Activated CD4-positive, alpha-beta memory T cell treated with anti-CD3 and anti-CD28 coated beads for 36 hours (primary cell): ENCODE measurements at regions of chr1 and their contacts with region 1.

Region 1: GRCh38 chr1:168161459-168161858 is 17.3 kb upstream of the TIPRL start:
- DNase-seq: no peak
- H3K4me3 Mint-ChIP-seq: no peak overlapping the region
- H3K27ac Mint-ChIP-seq: no peak overlapping the region
- H3K4me1 Mint-ChIP-seq: no peaks in the 10 kb centered on the region
- H3K27me3 Mint-ChIP-seq: peaks cover 14% of the 10 kb centered on the region

Region 2: DNA sequence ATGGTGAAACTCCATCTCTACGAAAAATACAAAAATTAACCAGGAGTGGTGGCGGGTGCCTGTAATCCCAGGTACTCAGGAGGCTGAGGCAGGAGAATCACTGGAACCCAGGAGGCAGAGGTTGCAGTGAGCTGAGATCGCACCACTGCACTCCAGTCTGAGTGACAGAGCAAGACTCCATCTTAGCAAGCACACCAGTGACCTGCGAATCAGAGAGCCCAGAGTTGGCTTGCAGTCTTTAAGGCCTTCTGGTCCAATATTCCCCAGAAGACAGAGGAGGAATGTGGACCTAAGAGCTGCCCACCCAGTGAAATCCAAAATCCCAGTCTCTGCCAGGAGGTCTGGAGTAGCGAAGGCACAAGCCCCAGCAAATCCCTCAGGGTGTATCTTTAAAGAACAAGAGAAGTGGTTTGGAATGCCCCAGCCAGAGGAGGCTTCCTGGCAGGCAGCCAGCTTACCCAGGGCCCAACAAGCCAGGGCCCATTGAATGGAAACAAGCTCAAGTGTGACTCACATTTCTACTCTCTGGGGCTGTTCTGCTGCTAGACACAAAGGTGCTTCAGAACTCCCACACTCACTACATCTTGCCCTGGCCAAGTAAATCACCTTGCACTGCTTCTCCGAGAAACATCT is 48.7 kb before region 1 on chr1:
- CTCF ChIA-PET with region 1: no interaction called
- POLR2A ChIA-PET with region 1: no interaction called
- intact Hi-C with region 1: no loop called
- DNase-seq: peak; percentile 80
- H3K4me3 Mint-ChIP-seq: no peak overlapping the region
- H3K27ac Mint-ChIP-seq: no peak overlapping the region
- H3K4me1 Mint-ChIP-seq: peaks cover 8% of the 10 kb centered on the region
- H3K27me3 Mint-ChIP-seq: no peaks in the 10 kb centered on the region

Region 3: GRCh38 chr1:168145184-168146159 is 16.0 kb before region 1 on chr1:
- CTCF ChIA-PET with region 1: interaction called, 10 read pairs
- POLR2A ChIA-PET with region 1: no interaction called
- intact Hi-C with region 1: no loop called
- DNase-seq: peak; percentile 91
- H3K4me3 Mint-ChIP-seq: no peak overlapping the region
- H3K27ac Mint-ChIP-seq: no peak overlapping the region
- H3K4me1 Mint-ChIP-seq: peaks cover 13% of the 10 kb centered on the region
- H3K27me3 Mint-ChIP-seq: no peaks in the 10 kb centered on the region

Region 4: GRCh38 chr1:168301664-168302334 is 140.3 kb after region 1 on chr1:
- CTCF ChIA-PET with region 1: no interaction called
- POLR2A ChIA-PET with region 1: no interaction called
- intact Hi-C with region 1: no loop called
- DNase-seq: no peak
- H3K4me3 Mint-ChIP-seq: no peak overlapping the region
- H3K27ac Mint-ChIP-seq: no peak overlapping the region
- H3K4me1 Mint-ChIP-seq: no peaks in the 10 kb centered on the region
- H3K27me3 Mint-ChIP-seq: no peaks in the 10 kb centered on the region